Activated CD4-positive, alpha-beta T cell treated with anti-CD3 and anti-CD28 coated beads, Interleukin-2, amount 10 ng/mL, durations not matched to agents 24 days and 14 days (primary cell): ENCODE measurements at regions of chr2 and their contacts with region 1.

Region 1: DNA sequence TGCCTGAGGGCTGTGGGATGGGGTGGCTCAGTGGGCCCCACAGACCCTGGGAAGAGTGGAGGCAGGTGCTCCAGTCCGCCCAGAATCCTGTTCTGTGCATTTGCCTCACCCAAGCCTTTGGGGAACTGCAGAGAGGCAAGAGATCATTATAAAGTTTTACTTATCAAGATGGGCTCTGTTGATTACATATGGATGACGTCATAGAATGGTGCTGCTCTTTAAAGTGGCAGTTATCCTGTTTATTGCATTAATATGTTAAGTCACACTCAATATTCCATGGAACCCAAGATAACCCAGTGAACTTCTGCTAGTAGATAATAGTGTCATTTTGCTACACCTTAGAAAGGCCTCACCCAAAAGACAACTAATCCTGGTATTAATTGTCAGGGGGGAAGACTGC is 44.0 kb downstream of the SP140L start:
- DNase-seq: no peak
- H3K4me3 Mint-ChIP-seq: no peak overlapping the region
- H3K27ac Mint-ChIP-seq: no peak overlapping the region
- H3K4me1 Mint-ChIP-seq: peaks cover 6% of the 10 kb centered on the region
- H3K27me3 Mint-ChIP-seq: no peaks in the 10 kb centered on the region

Region 2: DNA sequence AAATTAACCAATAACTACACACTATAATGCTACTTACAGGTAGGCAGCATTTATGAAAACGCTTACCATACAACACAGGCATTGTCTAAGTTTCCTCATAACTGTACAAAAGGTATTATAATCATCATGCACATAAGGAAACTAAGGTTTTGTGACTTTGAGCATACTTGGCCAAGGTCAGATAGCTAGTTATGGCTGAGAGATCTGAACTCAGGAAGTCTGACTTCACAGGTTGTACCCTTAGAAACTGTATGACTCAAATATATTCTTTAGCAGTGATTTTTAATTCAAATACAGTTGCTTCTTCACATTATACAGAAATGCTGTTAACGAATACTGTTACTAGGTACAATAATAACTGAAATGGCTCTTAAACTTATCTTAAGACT is 538.5 kb before region 1 on chr2:
- intact Hi-C with region 1: no loop called
- DNase-seq: no peak
- H3K4me3 Mint-ChIP-seq: no peak overlapping the region
- H3K27ac Mint-ChIP-seq: no peak overlapping the region
- H3K4me1 Mint-ChIP-seq: peaks cover 28% of the 10 kb centered on the region
- H3K27me3 Mint-ChIP-seq: no peaks in the 10 kb centered on the region

Region 3: GRCh38 chr2:230347659-230348305 is 23.2 kb before region 1 on chr2:
- intact Hi-C with region 1: no loop called
- DNase-seq: peak; percentile 86
- H3K4me3 Mint-ChIP-seq: peak overlapping the region; percentile 62
- H3K27ac Mint-ChIP-seq: peak overlapping the region; percentile 93
- H3K4me1 Mint-ChIP-seq: peaks cover 59% of the 10 kb centered on the region
- H3K27me3 Mint-ChIP-seq: no peaks in the 10 kb centered on the region

Region 4: GRCh38 chr2:230383453-230383852 is 12.5 kb after region 1 on chr2:
- intact Hi-C with region 1: loop called (anchors 2 kb)
- DNase-seq: no peak
- H3K4me3 Mint-ChIP-seq: no peak overlapping the region
- H3K27ac Mint-ChIP-seq: no peak overlapping the region
- H3K4me1 Mint-ChIP-seq: peaks cover 7% of the 10 kb centered on the region
- H3K27me3 Mint-ChIP-seq: no peaks in the 10 kb centered on the region

Region 5: GRCh38 chr2:230520875-230521155 is 149.8 kb after region 1 on chr2:
- intact Hi-C with region 1: no loop called
- DNase-seq: no peak
- H3K4me3 Mint-ChIP-seq: no peak overlapping the region
- H3K27ac Mint-ChIP-seq: no peak overlapping the region
- H3K4me1 Mint-ChIP-seq: no peaks in the 10 kb centered on the region
- H3K27me3 Mint-ChIP-seq: no peaks in the 10 kb centered on the region